ENCODE measurements at regions of chr1 and their contacts with region 1.

Region 1: GRCh38 chr1:31977385-31978131 is 36.1 kb upstream of the KHDRBS1 start:
- DNase-seq: peak; percentile 67
- ATAC-seq: peak; percentile 99
- H3K4me3 ChIP-seq: no peak overlapping the region
- H3K27ac ChIP-seq: no peak overlapping the region
- H3K4me1 ChIP-seq: peaks cover 3 to 7% of the 10 kb centered on the region in 2 experiments; a peak in 3 of 4 replicates
- H3K27me3 ChIP-seq: no peaks in the 10 kb centered on the region
- CTCF ChIP-seq: peak; percentile 62 to 75 (median 72)
- POLR2A ChIP-seq: no peak
- RAD21 ChIP-seq: peak; percentile 75

Region 2: GRCh38 chr1:31815752-31816500 is 161.6 kb before region 1 on chr1 and contains the start of gene SPOCD1:
- CTCF ChIA-PET with region 1: no interaction called
- POLR2A ChIA-PET with region 1: interaction called, 3 read pairs
- RAD21 ChIA-PET with region 1: no interaction called
- intact Hi-C with region 1: loop called (anchors 5 kb)
- DNase-seq: peak; percentile 83
- ATAC-seq: peak; percentile 97
- H3K4me3 ChIP-seq: peak within 1 kb of the TSS; percentile 54 to 60
- H3K27ac ChIP-seq: no peak within 1 kb of the TSS; the same call in 1 of the 2 replicates
- H3K4me1 ChIP-seq: peaks cover 3 to 12% of the 10 kb centered on the region in 2 experiments; a peak in 3 of 4 replicates
- H3K27me3 ChIP-seq: no peaks in the 10 kb centered on the region
- CTCF ChIP-seq: peak; percentile 90 to 96 (median 95)
- POLR2A ChIP-seq: peak; percentile 36
- RAD21 ChIP-seq: peak; percentile 96
- total RNA-seq, gene SPOCD1: 5.0 TPM

Region 3: DNA sequence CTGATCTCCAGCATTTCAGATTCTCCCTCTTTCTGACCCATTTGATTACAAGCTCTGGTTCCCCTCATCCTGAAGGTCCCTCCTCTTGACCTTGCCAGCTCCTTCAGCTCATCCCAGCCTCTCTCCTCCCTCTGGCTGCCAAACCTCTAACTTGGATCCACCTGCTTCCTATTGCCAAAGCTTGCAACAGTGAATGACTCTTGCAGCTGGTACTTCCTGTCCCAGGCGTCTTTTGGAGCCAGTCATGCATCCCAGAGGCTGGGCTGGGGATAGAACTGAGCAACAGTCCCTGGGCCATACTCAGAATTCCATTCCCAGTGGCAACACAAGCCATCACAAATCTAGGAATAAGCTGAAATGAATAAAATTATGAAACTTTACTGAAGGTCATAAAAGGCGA is 134.1 kb before region 1 on chr1:
- CTCF ChIA-PET with region 1: no interaction called
- POLR2A ChIA-PET with region 1: no interaction called
- RAD21 ChIA-PET with region 1: no interaction called
- intact Hi-C with region 1: no loop called
- DNase-seq: peak; percentile 6
- ATAC-seq: no peak
- H3K4me3 ChIP-seq: no peak overlapping the region
- H3K27ac ChIP-seq: no peak overlapping the region
- H3K4me1 ChIP-seq: no peaks in the 10 kb centered on the region
- H3K27me3 ChIP-seq: no peaks in the 10 kb centered on the region
- CTCF ChIP-seq: no peak
- POLR2A ChIP-seq: no peak
- RAD21 ChIP-seq: no peak

Region 4: DNA sequence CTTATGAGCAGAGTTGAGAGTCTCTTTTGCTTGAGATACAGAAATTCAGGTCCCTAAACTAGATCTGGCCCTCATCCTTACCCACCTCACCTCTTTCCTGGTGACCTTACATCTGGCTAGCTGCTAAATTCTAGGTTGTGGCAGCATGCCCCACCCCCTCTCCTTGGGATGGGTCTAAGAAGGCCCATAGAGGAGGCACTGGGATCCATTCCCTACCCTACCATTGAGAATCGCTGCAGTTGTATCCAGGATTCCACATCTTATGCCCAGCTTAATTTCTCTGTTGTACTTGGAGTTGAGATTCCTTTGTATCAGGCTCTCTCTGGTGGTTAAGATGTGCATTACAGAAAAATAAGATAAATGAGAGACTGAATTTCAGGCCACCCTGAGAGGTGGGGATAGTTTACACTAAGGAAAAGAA is 85.7 kb after region 1 on chr1:
- CTCF ChIA-PET with region 1: interaction called, 17 read pairs
- POLR2A ChIA-PET with region 1: interaction called, 3 read pairs
- RAD21 ChIA-PET with region 1: interaction called in 1 of 2 experiments, 4 read pairs
- intact Hi-C with region 1: loop called (anchors 1 kb)
- DNase-seq: peak; percentile 32
- ATAC-seq: peak; percentile 61
- H3K4me3 ChIP-seq: no peak overlapping the region
- H3K27ac ChIP-seq: peak overlapping the region; percentile 57
- H3K4me1 ChIP-seq: peaks cover 31 to 33% of the 10 kb centered on the region in 2 experiments
- H3K27me3 ChIP-seq: no peaks in the 10 kb centered on the region
- CTCF ChIP-seq: peak; percentile 41 to 65 (median 59); a peak in 5 of 6 replicates
- POLR2A ChIP-seq: no peak
- RAD21 ChIP-seq: peak; percentile 86

Region 5: DNA sequence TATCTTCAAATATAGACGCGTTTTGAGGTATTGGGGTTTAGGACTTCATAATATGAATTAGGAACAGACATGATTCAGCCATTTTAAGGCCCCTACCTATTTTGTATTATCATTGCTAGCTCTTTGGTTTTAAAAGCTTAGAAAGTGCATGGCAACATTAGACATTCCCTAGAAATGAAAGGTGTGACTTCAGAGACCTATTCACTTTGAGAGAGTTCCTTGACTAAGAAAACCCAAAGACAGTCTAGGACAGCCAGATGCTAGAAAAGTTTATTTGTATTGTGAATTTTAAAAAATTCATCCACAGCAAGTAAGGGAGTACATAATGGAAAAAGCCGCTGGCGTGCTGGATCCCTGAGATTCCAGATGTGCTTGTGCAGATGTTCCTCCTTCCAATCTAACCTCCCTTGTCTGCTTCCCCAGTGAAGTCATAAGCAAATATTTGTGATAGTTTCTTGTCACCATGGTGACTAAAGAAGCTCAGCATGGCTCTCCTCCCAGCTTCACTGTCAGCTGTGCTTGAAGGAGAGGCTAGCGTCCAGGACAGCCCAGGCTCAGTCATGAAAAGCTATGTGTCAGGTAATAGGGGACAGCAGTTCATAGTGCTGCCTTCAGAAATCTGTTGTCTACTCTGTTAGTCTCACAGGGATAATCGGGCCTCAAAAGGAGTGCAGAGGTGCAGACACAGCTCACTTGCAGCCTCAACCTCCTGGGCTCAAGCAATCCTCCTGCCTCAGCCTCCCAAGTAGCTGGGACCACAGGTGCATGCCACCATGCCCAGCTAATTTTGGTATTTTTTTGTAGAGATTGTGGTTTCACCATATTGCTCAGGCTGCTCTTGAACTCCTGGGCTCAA is 165.1 kb after region 1 on chr1:
- CTCF ChIA-PET with region 1: no interaction called
- POLR2A ChIA-PET with region 1: no interaction called
- RAD21 ChIA-PET with region 1: no interaction called
- intact Hi-C with region 1: no loop called
- DNase-seq: no peak
- ATAC-seq: peak; percentile 41; the same call in 1 of the 2 replicates
- H3K4me3 ChIP-seq: no peak overlapping the region
- H3K27ac ChIP-seq: no peak overlapping the region
- H3K4me1 ChIP-seq: peaks cover 21 to 33% of the 10 kb centered on the region in 2 experiments
- H3K27me3 ChIP-seq: no peaks in the 10 kb centered on the region
- CTCF ChIP-seq: no peak
- POLR2A ChIP-seq: no peak
- RAD21 ChIP-seq: no peak

Region 6: GRCh38 chr1:32413507-32414185 is 436.1 kb after region 1 on chr1:
- CTCF ChIA-PET with region 1: no interaction called
- POLR2A ChIA-PET with region 1: no interaction called
- RAD21 ChIA-PET with region 1: no interaction called
- intact Hi-C with region 1: no loop called
- DNase-seq: peak; percentile 69
- ATAC-seq: peak; percentile 98
- H3K4me3 ChIP-seq: no peak overlapping the region
- H3K27ac ChIP-seq: no peak overlapping the region
- H3K4me1 ChIP-seq: peaks cover 0 to 6% of the 10 kb centered on the region in 2 experiments; a peak in 2 of 4 replicates
- H3K27me3 ChIP-seq: no peaks in the 10 kb centered on the region
- CTCF ChIP-seq: peak; percentile 68 to 87 (median 76); a peak in 5 of 6 replicates
- POLR2A ChIP-seq: no peak
- RAD21 ChIP-seq: peak; percentile 86